Activated CD4-positive, alpha-beta memory T cell treated with anti-CD3 and anti-CD28 coated beads for 36 hours (primary cell): ENCODE measurements at regions of chr14 and their contacts with region 1.

Region 1: GRCh38 chr14:66105815-66106214 is 380.4 kb upstream of the CCDC196 start:
- DNase-seq: peak; percentile 34
- H3K4me3 Mint-ChIP-seq: no peak overlapping the region
- H3K27ac Mint-ChIP-seq: no peak overlapping the region
- H3K4me1 Mint-ChIP-seq: peaks cover 7% of the 10 kb centered on the region
- H3K27me3 Mint-ChIP-seq: peaks cover 3% of the 10 kb centered on the region

Region 2: DNA sequence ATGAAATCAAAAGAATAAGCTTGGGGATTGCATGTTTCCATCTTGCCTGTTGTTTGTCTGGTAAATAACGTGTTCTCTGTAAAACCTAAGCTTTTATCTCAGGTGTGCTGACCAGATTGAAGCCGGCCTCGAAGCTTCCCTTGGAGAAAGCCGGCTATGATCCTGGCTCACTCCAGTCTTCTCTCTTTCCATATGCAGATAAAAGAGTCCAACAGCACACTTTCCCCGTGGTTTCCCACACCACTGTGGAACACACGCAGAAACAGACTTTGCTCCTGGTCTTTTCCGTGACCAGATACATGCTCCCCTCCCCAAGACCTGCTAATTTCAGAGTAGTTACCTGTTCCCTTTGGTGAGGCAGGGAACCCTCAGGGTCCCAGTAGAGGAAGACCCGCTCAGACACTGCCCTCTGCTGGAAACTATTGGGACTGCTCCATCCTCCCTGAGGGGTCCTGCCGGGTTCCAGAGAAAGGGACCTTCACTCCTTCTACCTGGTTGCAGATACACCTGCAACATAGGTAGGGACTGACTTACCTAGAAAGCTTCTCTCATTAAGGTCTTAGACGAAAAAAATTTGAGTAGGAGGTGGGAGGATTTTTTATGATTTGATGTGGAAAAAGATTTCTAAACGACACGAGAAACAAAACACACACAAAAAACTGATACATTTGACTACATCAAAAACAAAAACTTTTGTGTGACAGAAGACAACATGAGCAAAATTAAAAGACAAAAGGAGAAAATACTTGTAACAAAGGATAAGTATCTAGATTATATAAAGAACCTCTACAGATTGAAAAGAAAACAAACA is 35.1 kb before region 1 on chr14:
- CTCF ChIA-PET with region 1: interaction called, 10 read pairs
- POLR2A ChIA-PET with region 1: no interaction called
- intact Hi-C with region 1: no loop called
- DNase-seq: peak; percentile 72
- H3K4me3 Mint-ChIP-seq: no peak overlapping the region
- H3K27ac Mint-ChIP-seq: no peak overlapping the region
- H3K4me1 Mint-ChIP-seq: no peaks in the 10 kb centered on the region
- H3K27me3 Mint-ChIP-seq: peaks cover 1% of the 10 kb centered on the region

Region 3: GRCh38 chr14:66121855-66122254 is 16.0 kb after region 1 on chr14:
- CTCF ChIA-PET with region 1: no interaction called
- POLR2A ChIA-PET with region 1: no interaction called
- intact Hi-C with region 1: no loop called
- DNase-seq: no peak
- H3K4me3 Mint-ChIP-seq: no peak overlapping the region
- H3K27ac Mint-ChIP-seq: no peak overlapping the region
- H3K4me1 Mint-ChIP-seq: no peaks in the 10 kb centered on the region
- H3K27me3 Mint-ChIP-seq: peaks cover 15% of the 10 kb centered on the region